Ovary (tissue), 10 donors: ENCODE measurements at regions of chr11 and their contacts with region 1.

Region 1: DNA sequence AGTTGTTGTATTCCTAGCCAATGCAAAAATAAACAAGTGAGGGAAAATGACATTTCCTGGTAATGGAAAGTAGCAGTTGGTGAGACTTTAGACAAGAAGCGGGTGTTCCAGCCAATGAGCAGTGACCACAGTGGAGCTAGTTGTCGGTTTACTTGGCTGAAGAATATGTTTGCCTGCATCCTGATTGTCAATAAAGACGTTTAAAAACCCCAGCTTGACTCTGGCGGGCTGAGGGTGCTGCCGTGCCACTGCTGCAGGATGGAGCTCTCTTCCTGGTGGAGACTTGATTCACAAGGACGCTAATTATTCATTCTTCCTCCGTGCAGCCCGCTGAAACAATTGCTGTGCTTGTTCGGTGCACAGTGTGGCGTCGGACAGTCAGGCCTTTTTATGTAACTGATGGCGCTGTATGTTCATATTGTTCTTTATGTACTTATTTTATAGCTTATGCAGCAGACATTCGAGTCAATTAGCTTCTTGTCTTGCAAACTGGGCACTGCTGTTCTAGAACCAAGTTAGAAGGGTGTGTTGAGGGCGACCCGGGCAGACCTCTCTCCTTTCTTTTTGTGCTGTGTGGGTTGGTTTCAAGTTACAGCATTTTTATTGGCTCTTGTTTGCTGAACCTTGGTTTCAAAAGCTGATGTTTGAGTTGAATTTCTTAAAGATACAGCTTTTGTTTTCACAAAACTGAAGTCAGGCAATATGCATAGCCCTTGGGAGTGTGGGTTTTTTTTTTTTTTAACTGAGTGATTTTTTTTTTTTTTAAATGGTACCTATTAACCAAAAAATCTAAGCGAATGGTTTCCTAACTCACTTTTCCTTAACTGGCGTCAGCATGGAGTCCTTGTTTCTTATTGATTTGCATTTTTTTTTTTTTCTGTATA is 153.9 kb downstream of the TEAD1 start:
- DNase-seq: peak in 2 of 5 donors; percentile 34 to 48
- H3K4me3 ChIP-seq: peak overlapping the region; percentile 27
- H3K27ac ChIP-seq: peak overlapping the region in 1 of 2 donors; percentile 78
- H3K4me1 ChIP-seq: peaks cover 32% of the 10 kb centered on the region
- H3K27me3 ChIP-seq: no peaks in the 10 kb centered on the region
- CTCF ChIP-seq: no peak
- EP300 ChIP-seq: no peak
- POLR2A ChIP-seq: no peak

Region 2: GRCh38 chr11:12871788-12872321 is 43.7 kb after region 1 on chr11:
- intact Hi-C with region 1: loop called in 1 of 4 experiments (anchors 10 kb)
- DNase-seq: no peak
- H3K4me3 ChIP-seq: no peak overlapping the region
- H3K27ac ChIP-seq: no peak overlapping the region
- H3K4me1 ChIP-seq: peaks cover 6% of the 10 kb centered on the region
- H3K27me3 ChIP-seq: no peaks in the 10 kb centered on the region
- CTCF ChIP-seq: no peak
- EP300 ChIP-seq: no peak
- POLR2A ChIP-seq: no peak